Aorta (tissue), 5 donors: ENCODE measurements at regions of chr3 and their contacts with region 1.

Region 1: DNA sequence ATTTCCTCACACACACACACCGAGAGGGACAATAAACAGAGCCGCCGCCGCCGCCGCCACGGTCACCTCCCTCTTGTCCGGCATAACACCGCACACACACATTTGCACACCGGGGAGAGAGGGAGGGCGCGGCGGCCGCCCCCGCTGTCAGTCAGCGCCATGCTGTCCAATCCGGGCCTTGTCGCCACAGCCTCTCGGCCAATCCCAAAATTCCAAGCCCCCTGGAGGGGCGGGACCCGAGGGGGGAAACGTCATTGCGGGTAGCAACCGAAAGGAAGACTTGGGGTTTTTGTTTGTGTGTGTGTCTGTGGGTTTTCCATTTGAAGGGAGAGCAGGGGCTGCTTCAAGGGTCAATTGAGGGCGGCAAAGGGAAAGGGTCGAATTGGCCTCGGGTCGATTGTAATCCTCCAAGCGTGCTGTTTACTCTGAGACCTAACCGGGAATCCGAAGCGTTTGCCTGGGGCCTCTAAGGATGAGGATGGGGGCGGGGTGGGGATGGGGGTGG is at the start of gene TOP2B:
- DNase-seq: peak; percentile 97
- ATAC-seq: peak; percentile 99
- H3K4me3 ChIP-seq: peak within 1 kb of the TSS; percentile 80 to 95
- H3K27ac ChIP-seq: peak within 1 kb of the TSS; percentile 62 to 93
- H3K4me1 ChIP-seq: no peaks in the 10 kb centered on the region
- H3K27me3 ChIP-seq: no peaks in the 10 kb centered on the region
- total RNA-seq, gene TOP2B: 89.2 to 98.3 TPM

Region 2: GRCh38 chr3:25789596-25790556 is 125.0 kb after region 1 on chr3 and contains the start of gene OXSM:
- intact Hi-C with region 1: loop called (anchors 5 kb)
- DNase-seq: peak; percentile 95 to 97
- ATAC-seq: peak; percentile 97
- H3K4me3 ChIP-seq: peak within 1 kb of the TSS; percentile 7 to 67
- H3K27ac ChIP-seq: peak within 1 kb of the TSS; percentile 6 to 32
- H3K4me1 ChIP-seq: no peaks in the 10 kb centered on the region
- H3K27me3 ChIP-seq: no peaks in the 10 kb centered on the region
- total RNA-seq, gene OXSM: 3.9 to 5.9 TPM